Activated T-helper 1 cell treated with anti-CD3 and anti-CD28 coated beads, Interleukin-12 subunit alpha, Interleukin-12 subunit beta, Interleukin-2, Interleukin-4 antibody, amounts not matched to agents 30 ng/mL and 10 ng/mL and 1 ng/mL, durations not matched to agents 14 hours and 24 hours and 36 hours (primary cell): ENCODE measurements at regions of chr6 and their contacts with region 1.

Region 1: DNA sequence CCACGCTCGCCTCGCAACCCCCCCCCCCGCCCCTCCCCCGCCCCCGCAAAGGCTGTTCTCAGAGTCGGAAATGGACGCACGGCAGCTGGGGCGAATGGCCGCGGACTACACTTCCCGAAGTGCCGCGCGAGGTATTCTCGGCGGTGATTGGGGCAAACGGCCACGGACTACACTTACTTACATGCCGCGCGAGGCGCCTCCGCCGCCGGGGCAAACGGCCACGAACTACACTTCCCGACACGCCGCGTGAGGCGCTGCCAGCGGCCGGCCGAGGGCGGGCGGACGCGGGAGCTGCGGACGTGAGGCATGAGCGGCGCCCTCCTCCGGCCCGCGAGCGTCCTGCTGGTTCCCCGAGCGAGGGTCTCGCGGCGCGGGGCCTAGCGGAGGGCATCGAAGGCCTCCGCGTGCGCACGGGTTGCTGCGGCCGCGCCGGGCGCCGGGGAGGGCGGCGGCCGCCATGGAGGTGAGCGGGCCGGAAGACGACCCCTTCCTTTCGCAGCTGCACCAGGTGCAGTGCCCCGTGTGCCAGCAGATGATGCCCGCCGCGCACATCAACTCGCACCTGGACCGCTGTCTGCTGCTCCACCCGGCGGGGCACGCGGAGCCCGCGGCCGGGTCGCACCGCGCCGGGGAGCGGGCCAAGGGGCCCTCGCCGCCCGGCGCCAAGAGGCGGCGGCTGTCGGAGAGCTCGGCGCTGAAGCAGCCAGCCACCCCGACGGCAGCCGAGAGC is at the start of gene WRNIP1:
- DNase-seq: peak; percentile 95
- H3K4me3 Mint-ChIP-seq: peak within 1 kb of the TSS; percentile 96
- H3K27ac Mint-ChIP-seq: peak within 1 kb of the TSS; percentile 98
- H3K4me1 Mint-ChIP-seq: peaks cover 52% of the 10 kb centered on the region
- H3K27me3 Mint-ChIP-seq: no peaks in the 10 kb centered on the region
- total RNA-seq, gene WRNIP1: 47.5 and 51.3 TPM in 2 replicates

Region 2: GRCh38 chr6:2542858-2543218 is 222.5 kb before region 1 on chr6:
- intact Hi-C with region 1: loop called (anchors 5 kb)
- DNase-seq: peak; percentile 78
- H3K4me3 Mint-ChIP-seq: peak overlapping the region; percentile 41
- H3K27ac Mint-ChIP-seq: peak overlapping the region; percentile 74
- H3K4me1 Mint-ChIP-seq: peaks cover 39% of the 10 kb centered on the region
- H3K27me3 Mint-ChIP-seq: peaks cover 66% of the 10 kb centered on the region

Region 3: GRCh38 chr6:2841264-2842138 is 76.2 kb after region 1 on chr6 and contains the start of gene SERPINB1:
- intact Hi-C with region 1: loop called (anchors 1 kb)
- DNase-seq: peak; percentile 80
- H3K4me3 Mint-ChIP-seq: peak within 1 kb of the TSS; percentile 96
- H3K27ac Mint-ChIP-seq: peak within 1 kb of the TSS; percentile 93
- H3K4me1 Mint-ChIP-seq: peaks cover 62% of the 10 kb centered on the region
- H3K27me3 Mint-ChIP-seq: no peaks in the 10 kb centered on the region
- total RNA-seq, gene SERPINB1: 79.5 and 80.1 TPM in 2 replicates

Region 4: DNA sequence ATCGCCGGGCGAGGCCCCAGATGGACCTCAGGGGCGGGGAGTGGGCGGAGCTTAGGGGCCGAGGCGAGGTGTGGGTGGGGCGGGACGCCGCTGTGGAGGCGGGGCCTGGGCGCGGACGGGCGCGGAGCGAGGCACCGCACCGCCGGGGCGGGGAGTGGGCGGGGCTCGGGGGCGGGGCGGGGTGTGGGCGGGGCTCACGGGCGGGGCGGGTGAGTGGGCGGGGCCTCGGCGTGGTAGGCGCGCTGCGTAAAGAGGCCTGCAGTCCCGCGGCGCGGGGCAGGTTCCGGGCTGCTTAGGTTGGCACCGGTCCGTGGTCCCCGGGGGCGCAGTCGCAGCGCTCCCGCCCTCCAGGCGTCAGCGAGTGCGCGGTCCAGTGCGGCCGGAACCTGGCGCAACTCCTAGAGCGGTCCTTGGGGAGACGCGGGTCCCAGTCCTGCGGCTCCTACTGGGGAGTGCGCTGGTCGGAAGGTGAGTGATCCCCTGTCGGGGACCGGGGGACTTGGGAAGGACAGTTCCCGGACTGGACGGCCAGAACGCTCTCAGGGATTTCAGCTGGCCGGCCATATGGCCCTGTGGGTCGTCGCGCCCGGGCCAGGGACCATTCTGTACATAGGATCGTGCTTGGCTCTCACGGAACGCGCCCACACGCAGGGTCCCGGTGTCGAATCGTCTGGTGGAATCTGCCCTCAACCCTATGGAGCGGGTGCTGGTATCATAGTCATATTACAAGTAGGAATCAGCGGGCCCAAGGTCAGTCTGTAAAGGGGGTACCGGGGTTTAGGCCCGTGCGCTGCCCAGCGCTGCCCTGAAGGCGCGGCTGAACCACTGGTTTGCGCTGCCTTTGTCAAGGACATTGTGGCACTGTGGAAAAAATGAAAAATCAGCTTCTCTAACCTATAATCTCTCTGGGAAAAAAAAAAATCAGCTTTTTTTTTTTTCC is 234.6 kb after region 1 on chr6 and contains the start of gene NQO2:
- intact Hi-C with region 1: loop called (anchors 1 kb)
- DNase-seq: peak; percentile 83
- H3K4me3 Mint-ChIP-seq: peak within 1 kb of the TSS; percentile 90
- H3K27ac Mint-ChIP-seq: peak within 1 kb of the TSS; percentile 90
- H3K4me1 Mint-ChIP-seq: peaks cover 38% of the 10 kb centered on the region
- H3K27me3 Mint-ChIP-seq: peaks cover 3% of the 10 kb centered on the region
- total RNA-seq, gene NQO2: 30.2 and 34.8 TPM in 2 replicates

Region 5: DNA sequence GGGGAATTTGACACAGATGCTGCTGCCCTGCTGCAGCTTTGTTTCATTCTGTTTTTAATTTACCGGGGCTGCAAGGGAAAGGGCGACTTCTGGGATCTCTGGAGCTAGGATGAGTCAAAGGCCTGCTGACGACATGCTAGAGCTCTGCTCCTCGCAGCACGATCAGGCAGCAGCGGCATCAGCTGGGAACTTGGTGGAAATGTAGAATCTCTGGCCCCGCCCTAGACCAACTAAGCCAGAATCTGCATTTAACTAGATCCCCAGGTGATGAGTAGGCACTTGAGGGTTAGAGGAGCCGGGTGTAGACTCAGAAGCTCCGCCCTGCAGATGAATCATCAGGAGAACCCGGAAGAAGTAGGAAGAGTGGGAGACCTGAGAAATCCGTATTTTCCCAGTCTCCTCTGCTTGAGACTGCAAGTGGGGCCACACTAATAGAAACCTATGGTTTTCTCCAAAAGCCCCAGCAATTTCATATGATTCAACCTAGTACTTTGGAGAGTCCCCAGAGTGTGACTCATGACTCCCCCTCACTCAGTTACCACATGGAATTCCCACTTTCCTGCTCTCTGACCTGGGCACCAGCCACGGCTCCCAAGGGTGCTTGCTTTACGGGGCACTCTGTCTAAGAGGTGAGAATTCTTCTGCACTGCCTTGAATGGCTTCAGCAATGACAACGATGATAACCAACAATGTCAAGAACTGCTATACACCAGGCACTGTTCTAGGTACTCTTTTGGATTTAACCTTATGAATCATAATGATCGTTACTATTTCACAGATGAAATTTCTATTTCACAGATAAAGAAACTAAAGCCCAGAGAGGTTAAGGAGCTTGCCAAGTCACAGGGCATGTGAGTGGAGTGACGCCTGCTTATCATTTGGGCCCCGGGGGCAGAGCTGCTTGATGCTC is 444.0 kb after region 1 on chr6:
- intact Hi-C with region 1: loop called (anchors 2 kb)
- DNase-seq: no peak
- H3K4me3 Mint-ChIP-seq: peak overlapping the region; percentile 43
- H3K27ac Mint-ChIP-seq: peak overlapping the region; percentile 89
- H3K4me1 Mint-ChIP-seq: peaks cover 41% of the 10 kb centered on the region
- H3K27me3 Mint-ChIP-seq: peaks cover 23% of the 10 kb centered on the region

Region 6: DNA sequence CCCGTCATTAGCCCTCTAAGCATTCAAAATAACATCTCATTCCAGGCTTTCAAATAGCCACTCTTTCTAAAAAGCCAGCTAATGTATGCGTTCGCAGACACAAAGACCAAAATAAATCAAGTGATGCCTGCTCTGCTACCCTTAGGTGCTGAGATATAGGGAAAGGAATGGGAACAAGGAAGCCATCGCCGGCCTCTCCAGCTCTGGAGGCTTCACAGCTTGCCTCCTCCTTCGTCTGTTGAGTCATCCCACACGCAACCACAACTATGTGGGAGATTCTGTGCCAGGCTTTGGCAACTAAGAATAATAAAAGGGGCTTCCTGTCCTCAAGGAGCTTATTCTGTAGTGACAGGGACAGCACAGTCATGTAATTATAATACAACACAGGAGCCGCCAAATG is 718.9 kb after region 1 on chr6:
- intact Hi-C with region 1: no loop called
- DNase-seq: no peak
- H3K4me3 Mint-ChIP-seq: no peak overlapping the region
- H3K27ac Mint-ChIP-seq: no peak overlapping the region
- H3K4me1 Mint-ChIP-seq: no peaks in the 10 kb centered on the region
- H3K27me3 Mint-ChIP-seq: no peaks in the 10 kb centered on the region

Region 7: DNA sequence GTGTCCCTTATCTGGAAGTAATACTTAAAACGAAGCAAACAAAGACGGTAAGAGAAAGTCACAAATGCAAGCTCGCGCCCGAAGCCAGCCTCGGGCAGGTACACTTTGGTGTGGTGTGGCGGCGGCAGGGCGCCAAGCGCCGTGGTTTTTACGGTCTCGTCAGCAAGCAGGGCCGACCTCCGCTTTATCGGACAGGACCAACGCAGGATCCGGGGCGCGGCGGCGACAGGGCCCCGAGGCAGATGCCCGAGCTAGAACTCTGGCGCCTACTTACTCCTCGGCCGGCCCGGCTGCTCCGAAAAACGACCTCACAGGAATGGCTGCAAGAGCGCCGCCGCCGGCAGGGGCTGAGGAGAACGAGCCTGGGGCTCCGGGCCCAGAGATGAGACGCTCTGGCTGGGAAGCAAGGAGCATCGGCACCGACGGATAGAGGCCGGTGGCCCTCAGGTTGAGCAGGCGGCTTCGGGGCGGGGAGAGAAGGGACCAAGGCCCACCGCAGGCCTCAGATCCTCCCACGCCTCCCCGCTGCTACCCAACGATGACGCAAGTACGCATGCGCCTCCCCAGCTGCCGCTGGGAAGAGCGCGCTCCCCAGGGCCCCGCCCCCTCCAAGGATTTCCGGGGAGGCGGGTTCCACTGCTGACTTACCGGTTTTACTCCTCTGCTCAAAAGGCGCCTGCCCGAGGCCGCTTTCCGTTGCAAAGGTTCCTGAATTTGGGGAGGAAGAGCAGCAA is 1253.0 kb after region 1 on chr6:
- intact Hi-C with region 1: loop called (anchors 2 kb)
- DNase-seq: peak; percentile 96
- H3K4me3 Mint-ChIP-seq: peak overlapping the region; percentile 99
- H3K27ac Mint-ChIP-seq: peak overlapping the region; percentile 100
- H3K4me1 Mint-ChIP-seq: peaks cover 60% of the 10 kb centered on the region
- H3K27me3 Mint-ChIP-seq: no peaks in the 10 kb centered on the region